A549 (cell line): ENCODE measurements at regions of chr12 and their contacts with region 1.

Region 1: DNA sequence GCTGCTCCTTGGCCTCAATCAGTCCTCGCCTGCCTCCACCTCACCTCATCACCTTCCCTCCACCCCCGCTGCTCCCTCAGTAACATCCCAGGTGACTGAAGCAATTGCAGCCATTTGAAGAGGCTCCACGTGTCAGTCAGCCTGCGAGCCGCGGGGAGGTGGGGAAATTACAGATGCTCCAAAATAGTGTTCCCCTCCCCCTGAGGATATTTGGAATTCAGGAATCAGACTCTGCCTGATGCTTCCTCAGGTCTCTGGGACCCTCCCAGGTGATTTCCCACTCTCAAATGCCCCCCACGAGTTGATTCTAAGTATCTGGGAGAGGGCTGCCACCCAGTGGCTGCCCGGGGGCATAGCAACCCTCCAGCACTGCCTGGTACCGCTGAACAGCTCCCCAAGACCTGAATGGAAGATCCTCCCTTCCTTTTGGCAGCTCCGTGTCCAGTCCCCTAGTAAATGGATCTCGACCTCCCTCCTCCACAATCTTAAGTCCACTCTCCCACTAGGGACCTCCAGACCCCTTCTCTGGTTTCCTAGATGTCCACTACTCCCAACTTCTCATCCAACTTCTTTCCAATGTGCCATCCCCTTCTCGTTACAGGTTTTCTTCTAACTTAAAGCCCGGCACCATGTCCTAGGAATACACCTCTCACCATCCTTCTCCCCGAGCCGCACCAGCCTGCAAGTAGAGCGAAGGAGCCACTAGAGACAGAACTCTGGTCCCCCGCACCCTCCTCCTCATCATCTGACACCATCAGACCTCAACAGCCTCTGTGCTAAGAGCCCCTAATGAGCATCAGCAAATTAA is 1.4 kb upstream of the ASIC1 start:
- DNase-seq: peak; percentile 59 to 85
- ATAC-seq: peak; percentile 51 to 77; a peak in 5 of 6 replicates
- H3K4me3 ChIP-seq: peak overlapping the region; percentile 85; the same call in 2 of the 3 replicates
- H3K27ac ChIP-seq: peak overlapping the region; percentile 38 to 55; a peak in 3 of 6 replicates
- H3K4me1 ChIP-seq: peaks cover 18% of the 10 kb centered on the region
- CTCF ChIP-seq: peak; percentile 96
- EP300 ChIP-seq: no peak
- POLR2A ChIP-seq: no peak
- RAD21 ChIP-seq: peak; percentile 80 to 87

Region 2: DNA sequence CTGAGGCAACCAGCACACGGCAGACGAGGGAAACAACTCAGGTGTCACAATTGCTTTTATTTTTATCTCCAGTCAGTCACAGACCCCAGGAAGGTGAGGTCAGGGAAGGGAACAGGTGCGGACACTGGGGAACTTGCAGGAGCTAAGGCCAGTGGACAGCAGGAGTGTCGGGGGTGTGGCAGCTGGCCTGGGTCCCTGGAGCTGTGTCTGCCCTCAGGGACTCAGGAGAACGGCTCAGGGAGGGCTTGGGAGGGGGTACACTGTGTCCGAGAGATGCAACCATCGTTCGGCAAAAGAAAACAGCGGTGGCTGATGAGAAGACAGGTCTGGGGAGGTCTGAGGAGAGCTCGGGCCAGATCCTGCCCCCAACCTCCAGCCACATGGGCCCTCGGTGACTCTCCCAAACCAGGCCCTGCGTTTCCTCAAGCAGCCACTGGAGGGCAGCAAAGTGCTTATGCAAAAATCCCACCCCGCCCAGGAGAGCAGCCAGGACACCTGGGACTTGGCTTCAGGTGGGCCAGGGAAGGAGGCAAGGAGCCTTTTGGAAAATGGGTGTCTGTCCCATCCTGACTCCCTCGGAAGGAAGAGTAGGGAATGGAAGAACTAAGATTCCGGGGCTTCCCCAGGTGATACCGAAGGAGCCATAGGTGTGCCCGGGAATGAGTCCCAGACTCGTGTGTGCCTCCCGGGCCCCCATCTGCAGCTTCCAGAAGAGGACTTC is 189.0 kb before region 1 on chr12:
- CTCF ChIA-PET with region 1: interaction called, 40 read pairs
- POLR2A ChIA-PET with region 1: no interaction called
- DNase-seq: peak; percentile 66 to 95
- ATAC-seq: peak; percentile 55 to 92
- H3K4me3 ChIP-seq: no peak overlapping the region
- H3K27ac ChIP-seq: peak overlapping the region in 1 of 2 experiments; percentile 22; a peak in 1 of 6 replicates
- H3K4me1 ChIP-seq: no peaks in the 10 kb centered on the region; the same call in 2 of the 3 replicates
- CTCF ChIP-seq: peak; percentile 88
- EP300 ChIP-seq: no peak
- POLR2A ChIP-seq: no peak
- RAD21 ChIP-seq: peak; percentile 84 to 91

Region 3: DNA sequence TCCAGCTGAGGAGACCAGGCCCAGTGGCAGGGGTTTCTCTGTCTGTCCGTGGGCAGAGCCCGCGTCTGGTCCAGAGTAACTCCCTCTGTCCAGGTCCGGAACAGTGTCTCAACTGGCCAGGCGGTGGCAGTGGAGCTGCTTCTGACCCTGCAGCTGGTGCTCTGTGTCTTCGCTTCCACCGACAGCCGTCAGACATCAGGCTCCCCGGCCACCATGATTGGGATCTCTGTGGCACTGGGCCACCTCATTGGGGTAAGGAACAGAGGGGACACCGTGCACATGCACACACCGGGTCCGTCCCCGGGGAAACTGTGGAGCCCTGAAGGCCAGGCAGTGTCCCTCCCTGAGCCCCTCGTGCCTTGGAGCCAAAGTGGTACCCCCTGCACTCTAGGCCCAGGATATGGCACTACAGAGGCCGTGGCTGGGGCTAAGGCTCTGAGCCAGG is 81.8 kb before region 1 on chr12:
- CTCF ChIA-PET with region 1: interaction called, 708 read pairs
- POLR2A ChIA-PET with region 1: no interaction called
- DNase-seq: peak in 1 of 2 experiments; percentile 48
- ATAC-seq: peak; percentile 73 to 86
- H3K4me3 ChIP-seq: no peak overlapping the region
- H3K27ac ChIP-seq: no peak overlapping the region
- H3K4me1 ChIP-seq: no peaks in the 10 kb centered on the region
- CTCF ChIP-seq: 0 out of 3 replicates have a peak, but pooled peaks have one; percentile 22
- EP300 ChIP-seq: no peak
- POLR2A ChIP-seq: no peak
- RAD21 ChIP-seq: peak in 1 of 2 experiments; percentile 27; a peak in 1 of 5 replicates

Region 4: DNA sequence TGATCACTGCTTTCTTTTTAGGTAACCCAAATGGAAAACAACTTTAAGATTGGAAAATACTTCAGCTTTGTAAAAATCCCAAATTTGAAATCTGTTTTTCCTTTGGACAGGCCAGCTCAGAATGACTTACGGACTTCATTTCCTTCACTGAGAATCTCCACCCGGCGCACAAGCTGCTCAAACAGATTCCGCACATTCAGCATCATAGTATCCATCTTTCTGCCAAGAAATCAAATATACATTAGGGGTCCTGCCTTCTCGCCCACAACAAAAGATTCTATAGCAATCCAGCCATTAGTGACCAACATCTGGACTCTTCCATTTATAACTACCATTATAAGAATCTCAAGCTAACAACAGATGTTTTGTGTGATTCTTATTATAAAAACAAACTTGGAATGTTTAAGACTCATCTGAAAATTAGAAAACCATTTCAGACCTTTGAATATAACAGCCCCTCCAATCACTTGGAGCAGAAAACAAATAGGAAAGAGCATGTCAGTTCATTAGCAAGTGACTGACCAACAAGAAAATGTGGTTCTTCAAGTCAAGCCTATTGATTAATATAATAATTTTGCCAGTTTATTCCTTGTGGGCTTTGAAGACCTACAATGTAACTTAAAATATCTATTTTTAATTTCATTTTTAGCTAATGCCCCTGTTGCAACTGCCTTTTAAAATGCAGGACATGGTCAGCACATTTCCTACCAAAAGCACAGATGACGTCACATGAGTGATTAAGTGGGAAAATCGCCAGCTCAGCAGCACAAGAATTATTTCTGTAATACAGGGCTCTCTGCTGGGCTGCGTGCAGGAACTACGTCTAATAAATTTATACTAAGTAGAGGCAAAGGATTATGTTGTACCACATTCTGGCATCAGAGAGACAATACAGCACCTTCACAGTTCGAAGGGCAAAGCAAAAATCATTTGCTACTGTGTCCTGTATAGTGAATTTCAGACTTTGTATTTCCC is 39.2 kb before region 1 on chr12:
- CTCF ChIA-PET with region 1: interaction called, 10 read pairs
- POLR2A ChIA-PET with region 1: no interaction called
- DNase-seq: no peak
- ATAC-seq: no peak
- H3K4me3 ChIP-seq: no peak overlapping the region
- H3K27ac ChIP-seq: no peak overlapping the region
- H3K4me1 ChIP-seq: peaks cover 7% of the 10 kb centered on the region; the same call in 2 of the 3 replicates
- CTCF ChIP-seq: no peak
- EP300 ChIP-seq: no peak
- POLR2A ChIP-seq: no peak
- RAD21 ChIP-seq: no peak

Region 5: DNA sequence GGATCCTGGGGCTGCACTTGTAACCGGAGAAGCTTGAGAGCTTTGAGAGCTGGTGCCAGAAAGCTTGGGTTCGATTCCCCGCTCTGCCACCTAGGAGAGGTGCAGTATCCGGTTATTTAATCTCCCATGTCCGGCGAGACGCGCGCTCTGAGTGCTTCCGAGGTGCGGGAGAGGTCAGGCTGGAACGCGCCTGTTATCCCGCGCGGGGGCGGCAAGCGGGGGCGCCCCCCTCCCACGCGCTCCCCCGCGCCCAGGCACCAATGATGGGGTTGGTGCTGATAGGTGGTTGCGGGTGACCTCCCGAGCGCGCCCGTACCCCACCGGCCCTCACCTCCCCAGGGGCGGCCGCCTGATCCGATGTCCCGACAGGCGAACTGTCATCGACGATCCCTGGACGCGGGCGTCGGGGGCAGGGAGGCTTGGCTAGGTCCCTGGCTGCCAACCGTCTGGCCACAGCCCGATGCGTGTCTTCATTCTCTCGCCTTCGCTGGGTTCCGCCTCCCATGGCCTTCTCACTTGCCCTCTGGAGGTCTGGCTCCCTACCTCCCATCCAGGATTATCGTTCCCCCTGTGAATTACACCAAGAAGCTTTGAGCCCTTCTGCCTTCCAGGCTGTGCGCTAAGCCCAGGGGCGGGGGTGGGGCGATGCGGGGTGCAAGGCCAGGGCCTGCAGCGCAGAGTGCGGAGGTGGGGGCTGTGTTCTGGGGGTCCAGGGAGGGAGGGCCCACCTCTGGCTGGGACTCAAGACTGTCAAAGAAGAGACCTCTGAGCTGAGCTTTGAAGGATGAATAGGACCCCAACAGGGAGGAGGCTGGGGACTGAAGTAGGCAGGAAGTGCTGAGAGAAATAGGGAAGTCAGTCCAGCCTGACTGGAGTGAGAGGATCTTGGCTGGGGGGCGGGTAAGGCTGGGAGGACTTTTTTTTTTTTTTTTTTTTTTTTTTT is 23.1 kb before region 1 on chr12:
- CTCF ChIA-PET with region 1: interaction called, 185 read pairs
- POLR2A ChIA-PET with region 1: no interaction called
- DNase-seq: no peak
- ATAC-seq: peak in 1 of 2 experiments; percentile 19; a peak in 2 of 6 replicates
- H3K4me3 ChIP-seq: no peak overlapping the region
- H3K27ac ChIP-seq: no peak overlapping the region
- H3K4me1 ChIP-seq: no peaks in the 10 kb centered on the region
- CTCF ChIP-seq: no peak
- EP300 ChIP-seq: no peak
- POLR2A ChIP-seq: no peak
- RAD21 ChIP-seq: no peak

Region 6: DNA sequence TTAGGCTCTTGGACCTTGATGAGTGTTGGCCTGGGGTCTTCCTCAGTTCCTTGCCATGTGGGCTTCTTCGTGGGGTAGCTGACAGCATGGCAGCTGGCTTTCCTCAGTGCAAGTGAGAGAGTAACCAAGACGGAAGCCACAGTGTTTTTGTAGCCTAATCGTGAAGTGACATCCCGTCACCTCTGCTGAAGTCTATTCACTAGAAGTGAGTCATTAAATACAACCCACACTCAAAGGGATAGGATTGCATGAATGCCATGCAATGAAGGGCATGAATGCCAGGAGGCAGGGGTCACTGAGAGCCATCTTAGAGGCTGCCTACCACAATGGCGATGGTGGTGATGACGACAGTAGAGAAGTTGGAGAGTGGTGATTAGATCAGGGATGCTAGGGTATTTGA is 12.2 kb before region 1 on chr12:
- CTCF ChIA-PET with region 1: interaction called, 185 read pairs
- POLR2A ChIA-PET with region 1: no interaction called
- DNase-seq: no peak
- ATAC-seq: no peak
- H3K4me3 ChIP-seq: no peak overlapping the region
- H3K27ac ChIP-seq: no peak overlapping the region
- H3K4me1 ChIP-seq: no peaks in the 10 kb centered on the region
- CTCF ChIP-seq: no peak
- EP300 ChIP-seq: no peak
- POLR2A ChIP-seq: no peak
- RAD21 ChIP-seq: no peak

Region 7: DNA sequence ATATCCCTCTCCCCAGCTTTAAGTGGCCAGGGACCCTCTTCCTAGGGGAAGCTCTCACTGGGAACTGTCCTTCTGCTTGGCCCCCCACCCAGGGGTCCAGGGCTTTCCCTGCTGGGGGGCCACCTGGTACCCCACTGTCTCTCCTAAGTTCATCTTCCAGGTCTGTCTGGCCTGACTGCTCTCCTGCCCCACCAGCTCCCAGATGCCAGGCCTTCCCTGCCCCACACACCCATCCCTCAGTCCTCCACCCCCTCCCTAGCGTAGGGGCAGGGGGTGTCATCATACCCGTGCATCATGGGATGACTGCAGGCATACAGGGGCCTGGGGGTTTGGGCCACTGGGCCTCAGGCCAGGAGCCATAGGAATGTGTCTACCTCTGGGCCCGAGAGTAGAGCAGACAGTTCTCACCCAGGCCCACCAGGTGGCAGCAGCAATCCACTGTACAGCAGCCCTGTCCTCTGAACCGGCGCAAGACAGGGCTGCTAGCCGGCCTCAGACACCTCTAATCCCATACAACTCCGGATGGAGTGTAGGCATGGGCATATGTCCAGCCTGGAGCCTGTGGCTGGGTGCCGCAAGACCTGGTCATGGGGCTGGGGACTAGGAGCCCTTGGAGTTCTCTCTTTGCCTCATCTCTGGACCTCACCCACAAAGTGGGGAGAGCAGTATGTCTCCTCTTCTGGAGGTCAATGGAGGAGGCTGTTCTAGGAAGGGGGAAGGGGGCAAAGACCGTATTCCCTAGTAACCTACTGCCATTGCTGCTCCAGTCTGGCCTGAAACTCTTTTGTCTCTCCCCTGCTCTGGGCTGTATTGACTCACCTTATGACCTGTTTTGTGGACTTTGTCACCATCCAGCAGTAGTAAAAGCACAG is 19.1 kb after region 1 on chr12:
- CTCF ChIA-PET with region 1: interaction called, 68 read pairs
- POLR2A ChIA-PET with region 1: interaction called, 3 read pairs
- DNase-seq: peak; percentile 79 to 86
- ATAC-seq: peak; percentile 88 to 95
- H3K4me3 ChIP-seq: no peak overlapping the region
- H3K27ac ChIP-seq: peak overlapping the region in 1 of 2 experiments; percentile 59; a peak in 3 of 6 replicates
- H3K4me1 ChIP-seq: peaks cover 16% of the 10 kb centered on the region
- CTCF ChIP-seq: peak; percentile 94
- EP300 ChIP-seq: no peak
- POLR2A ChIP-seq: no peak
- RAD21 ChIP-seq: peak; percentile 98

Region 8: GRCh38 chr12:50099302-50100008 is 43.4 kb after region 1 on chr12:
- CTCF ChIA-PET with region 1: no interaction called
- POLR2A ChIA-PET with region 1: no interaction called
- DNase-seq: no peak
- ATAC-seq: no peak
- H3K4me3 ChIP-seq: no peak overlapping the region
- H3K27ac ChIP-seq: no peak overlapping the region
- H3K4me1 ChIP-seq: no peaks in the 10 kb centered on the region
- CTCF ChIP-seq: no peak
- EP300 ChIP-seq: no peak
- POLR2A ChIP-seq: no peak
- RAD21 ChIP-seq: no peak